ENCODE measurements at regions of chr2 and their contacts with region 1.

Region 1: DNA sequence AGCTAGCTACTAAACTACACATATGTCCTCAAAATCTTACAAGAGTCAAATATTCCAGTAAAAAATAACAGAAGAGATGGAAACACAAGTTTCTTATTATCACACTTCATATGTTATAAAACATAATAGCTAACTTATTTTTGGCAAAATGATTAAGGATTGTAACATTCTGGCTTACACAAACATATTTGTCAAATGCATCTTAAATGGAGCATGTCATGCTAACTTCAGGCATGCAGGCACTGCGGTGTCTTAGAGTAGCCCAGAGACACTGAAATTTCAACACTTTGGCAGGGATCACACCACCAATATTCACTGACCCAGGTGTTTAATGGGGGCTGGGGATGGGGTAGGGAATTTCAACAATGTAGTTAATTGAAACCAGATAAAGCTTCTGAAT is 51.6 kb downstream of the LDAH start:
- DNase-seq: no peak
- ATAC-seq: no peak
- H3K4me3 Mint-ChIP-seq: no peak overlapping the region
- H3K27ac Mint-ChIP-seq: no peak overlapping the region
- H3K4me1 Mint-ChIP-seq: no peaks in the 10 kb centered on the region
- H3K27me3 Mint-ChIP-seq: no peaks in the 10 kb centered on the region
- CTCF ChIP-seq: no peak

Region 2: GRCh38 chr2:20755132-20755800 is 16.0 kb before region 1 on chr2:
- CTCF ChIA-PET with region 1: no interaction called
- POLR2A ChIA-PET with region 1: no interaction called
- intact Hi-C with region 1: no loop called
- DNase-seq: no peak
- ATAC-seq: peak; percentile 18
- H3K4me3 Mint-ChIP-seq: no peak overlapping the region
- H3K27ac Mint-ChIP-seq: no peak overlapping the region
- H3K4me1 Mint-ChIP-seq: peaks cover 6% of the 10 kb centered on the region
- H3K27me3 Mint-ChIP-seq: no peaks in the 10 kb centered on the region
- CTCF ChIP-seq: no peak

Region 3: DNA sequence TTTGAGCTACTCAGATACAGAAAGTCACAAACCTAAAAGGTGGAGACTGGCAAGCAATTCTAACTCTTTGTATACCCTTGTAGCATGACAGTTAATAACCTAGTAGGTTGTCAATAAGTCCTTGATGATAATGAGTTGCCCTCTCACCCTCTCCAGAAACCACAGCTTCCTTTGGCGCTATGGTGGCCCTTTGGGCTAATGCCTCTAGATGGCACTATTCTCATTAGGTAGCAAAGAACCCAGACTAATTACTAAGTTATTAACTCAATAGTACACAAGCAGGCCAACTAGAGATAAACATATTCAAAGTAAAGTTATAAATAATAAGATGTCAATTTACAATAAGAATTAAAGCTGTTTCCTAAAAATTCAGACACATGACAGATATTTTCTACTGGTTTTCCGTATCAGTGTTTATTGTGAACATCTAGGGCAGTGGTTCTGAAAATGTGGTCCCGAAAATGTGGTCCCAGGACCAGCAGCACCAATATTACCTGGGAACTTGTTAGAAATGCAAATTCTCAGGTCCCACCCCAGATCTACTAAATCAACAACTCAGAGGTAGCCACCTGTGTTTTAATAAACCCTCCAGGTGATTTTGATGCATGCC is 10.5 kb after region 1 on chr2:
- CTCF ChIA-PET with region 1: interaction called, 15 read pairs
- POLR2A ChIA-PET with region 1: no interaction called
- intact Hi-C with region 1: no loop called
- DNase-seq: no peak
- ATAC-seq: no peak
- H3K4me3 Mint-ChIP-seq: no peak overlapping the region
- H3K27ac Mint-ChIP-seq: no peak overlapping the region
- H3K4me1 Mint-ChIP-seq: no peaks in the 10 kb centered on the region
- H3K27me3 Mint-ChIP-seq: no peaks in the 10 kb centered on the region
- CTCF ChIP-seq: no peak

Measured in activated B cell treated with CpG ODN at 0.5 μM for 24 hours (primary cell).